Psoas muscle (tissue), 8 donors: ENCODE measurements at regions of chr18 and their contacts with region 1.

Region 1: DNA sequence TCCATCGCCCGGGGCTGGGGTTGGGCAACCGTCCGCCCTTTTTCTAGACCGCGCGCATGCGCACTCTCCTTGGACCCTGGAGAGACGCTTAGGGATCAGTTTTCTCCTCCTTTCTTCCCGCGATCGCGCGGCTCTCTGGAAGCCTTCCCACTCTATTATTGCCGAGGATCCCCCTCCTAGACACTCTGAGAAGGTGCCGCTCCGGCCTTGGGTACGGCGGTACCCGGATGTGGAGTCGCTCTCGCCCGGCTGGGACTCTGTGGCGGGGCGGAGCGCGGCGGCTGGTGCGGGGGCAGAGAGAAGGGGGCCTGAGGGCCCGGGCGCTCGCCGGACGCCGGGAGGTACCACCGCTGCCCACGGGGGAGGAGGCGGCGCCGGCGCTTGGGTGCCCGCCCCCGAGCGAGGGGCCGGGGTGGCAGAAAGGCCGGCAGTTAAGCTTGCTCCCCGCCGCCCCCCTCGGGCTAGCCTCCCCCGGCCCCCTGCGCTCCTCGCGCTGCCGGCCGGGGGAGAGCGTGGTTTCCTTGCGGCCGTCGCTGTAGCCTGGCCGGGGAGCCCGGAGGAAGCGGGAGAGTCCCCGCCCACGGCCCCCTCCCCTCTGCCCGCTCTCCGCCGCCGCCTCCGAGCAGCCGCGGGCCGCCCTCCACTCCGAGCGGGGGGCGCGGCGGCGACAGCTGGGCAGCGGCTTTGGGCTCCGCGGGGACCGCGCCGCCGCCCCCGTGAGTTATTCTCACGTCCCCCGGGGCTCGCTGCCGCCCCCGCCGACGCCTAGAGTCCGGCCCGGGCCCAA is at the start of gene MIB1:
- DNase-seq: peak; percentile 99
- ATAC-seq: peak; percentile 85 to 91 (median 88)
- H3K4me3 ChIP-seq: peak within 1 kb of the TSS; percentile 99
- H3K27ac ChIP-seq: peak within 1 kb of the TSS; percentile 99
- H3K4me1 ChIP-seq: peaks cover 5% of the 10 kb centered on the region
- H3K27me3 ChIP-seq: no peaks in the 10 kb centered on the region
- CTCF ChIP-seq: peak; percentile 3
- total RNA-seq, gene MIB1: 16.1 to 21.3 (median 19.9) TPM

Region 2: GRCh38 chr18:21612125-21612991 is 128.6 kb before region 1 on chr18 and contains the start of gene SNRPD1:
- intact Hi-C with region 1: no loop called
- DNase-seq: peak; percentile 90 to 93
- ATAC-seq: peak; percentile 99
- H3K4me3 ChIP-seq: peak within 1 kb of the TSS; percentile 80
- H3K27ac ChIP-seq: peak within 1 kb of the TSS; percentile 86
- H3K4me1 ChIP-seq: peaks cover 17% of the 10 kb centered on the region
- H3K27me3 ChIP-seq: no peaks in the 10 kb centered on the region
- CTCF ChIP-seq: peak; percentile 92
- total RNA-seq, gene SNRPD1: 18.4 to 46.8 (median 33.2) TPM

Region 3: DNA sequence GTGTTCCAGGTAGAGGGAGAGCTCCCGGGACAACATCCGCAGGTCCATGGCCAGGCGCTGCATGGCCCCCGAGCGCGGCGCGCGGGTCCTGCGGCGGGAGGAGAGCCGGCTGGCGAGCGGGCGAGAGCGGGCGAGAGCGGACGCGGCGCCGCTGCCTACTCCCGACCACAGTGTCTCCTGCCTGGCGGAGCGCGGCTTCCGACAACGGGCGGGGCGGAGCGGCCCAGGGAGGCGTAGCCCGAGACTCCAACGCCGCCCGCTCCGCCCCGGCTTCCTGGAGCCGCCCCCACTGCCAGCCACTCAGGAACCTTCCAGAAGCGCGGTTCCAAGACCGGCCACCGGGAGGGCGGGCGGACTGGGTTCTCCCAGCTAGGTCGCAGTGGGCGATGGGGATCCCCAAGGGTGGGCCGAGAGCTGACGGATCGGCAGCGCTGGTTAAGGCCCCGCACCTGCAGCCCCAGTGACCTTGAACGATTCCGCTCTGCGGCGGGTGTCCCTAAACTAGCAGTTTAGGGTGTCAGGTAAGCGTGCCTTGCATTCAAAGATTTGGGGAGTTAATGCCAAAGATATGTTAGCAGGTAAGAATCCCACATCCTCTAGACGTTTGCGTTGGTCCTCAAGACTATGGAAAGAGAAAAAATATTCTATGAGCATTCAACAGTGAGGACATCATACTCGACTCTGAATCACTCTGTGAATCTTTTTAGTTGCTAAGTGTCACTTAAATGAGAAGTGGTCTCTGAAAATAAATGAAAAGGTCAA is 36.1 kb before region 1 on chr18 and contains the start of gene ABHD3:
- intact Hi-C with region 1: loop called (anchors 2 to 5 kb)
- DNase-seq: peak; percentile 95 to 96
- ATAC-seq: peak; percentile 98 to 99 (median 98)
- H3K4me3 ChIP-seq: peak within 1 kb of the TSS; percentile 95
- H3K27ac ChIP-seq: peak within 1 kb of the TSS; percentile 93
- H3K4me1 ChIP-seq: peaks cover 10% of the 10 kb centered on the region
- H3K27me3 ChIP-seq: no peaks in the 10 kb centered on the region
- CTCF ChIP-seq: peak; percentile 60
- total RNA-seq, gene ABHD3: 5.4 to 12.4 (median 6.2) TPM

Region 4: DNA sequence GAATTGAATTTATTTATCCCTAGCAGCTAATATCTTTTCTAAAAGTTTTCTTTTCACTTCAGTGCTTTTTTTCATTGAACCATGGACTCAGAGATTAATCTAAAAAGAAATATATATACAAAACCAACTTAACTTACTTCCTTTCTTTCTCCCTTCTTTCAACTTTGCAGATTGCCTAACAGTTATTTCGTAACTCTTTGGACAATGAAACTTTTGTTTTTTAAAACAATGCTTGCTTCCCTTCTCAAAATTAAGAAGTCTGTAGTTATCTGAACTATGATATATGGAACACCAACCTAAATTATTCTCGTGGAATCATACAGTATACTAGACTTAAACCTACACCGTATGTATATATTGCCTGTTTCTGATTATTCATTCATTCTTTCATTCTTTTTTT is 62.6 kb after region 1 on chr18:
- intact Hi-C with region 1: no loop called
- DNase-seq: no peak
- ATAC-seq: no peak
- H3K4me3 ChIP-seq: no peak overlapping the region
- H3K27ac ChIP-seq: no peak overlapping the region
- H3K4me1 ChIP-seq: peaks cover 19% of the 10 kb centered on the region
- H3K27me3 ChIP-seq: no peaks in the 10 kb centered on the region
- CTCF ChIP-seq: no peak